ENCODE measurements at regions of chr7 and their contacts with region 1.

Region 1: GRCh38 chr7:66681491-66682349 is 53.0 kb downstream of the KCTD7 start:
- DNase-seq: peak; percentile 87 to 98 (median 95)
- ATAC-seq: peak; percentile 95
- H3K4me3 ChIP-seq: peak overlapping the region; percentile 95
- H3K4me3 Mint-ChIP-seq: peak overlapping the region; percentile 99
- H3K27ac ChIP-seq: peak overlapping the region; percentile 96 to 99
- H3K27ac Mint-ChIP-seq: peak overlapping the region; percentile 98
- H3K4me1 ChIP-seq: peaks cover 29% of the 10 kb centered on the region
- H3K4me1 Mint-ChIP-seq: peaks cover 40% of the 10 kb centered on the region
- H3K27me3 ChIP-seq: no peaks in the 10 kb centered on the region
- H3K27me3 Mint-ChIP-seq: no peaks in the 10 kb centered on the region
- CTCF ChIP-seq: no peak

Region 2: GRCh38 chr7:66591799-66592596 is 89.7 kb before region 1 on chr7:
- CTCF ChIA-PET with region 1: no interaction called
- POLR2A ChIA-PET with region 1: no interaction called
- intact Hi-C with region 1: loop called in 1 of 2 experiments (anchors 1 kb)
- DNase-seq: peak; percentile 76 to 96 (median 88)
- ATAC-seq: peak; percentile 98
- H3K4me3 ChIP-seq: peak overlapping the region; percentile 97
- H3K4me3 Mint-ChIP-seq: peak overlapping the region; percentile 99
- H3K27ac ChIP-seq: peak overlapping the region; percentile 60 to 80
- H3K27ac Mint-ChIP-seq: peak overlapping the region; percentile 99
- H3K4me1 ChIP-seq: peaks cover 43% of the 10 kb centered on the region
- H3K4me1 Mint-ChIP-seq: peaks cover 47% of the 10 kb centered on the region
- H3K27me3 ChIP-seq: no peaks in the 10 kb centered on the region
- H3K27me3 Mint-ChIP-seq: no peaks in the 10 kb centered on the region
- CTCF ChIP-seq: no peak

Region 3: DNA sequence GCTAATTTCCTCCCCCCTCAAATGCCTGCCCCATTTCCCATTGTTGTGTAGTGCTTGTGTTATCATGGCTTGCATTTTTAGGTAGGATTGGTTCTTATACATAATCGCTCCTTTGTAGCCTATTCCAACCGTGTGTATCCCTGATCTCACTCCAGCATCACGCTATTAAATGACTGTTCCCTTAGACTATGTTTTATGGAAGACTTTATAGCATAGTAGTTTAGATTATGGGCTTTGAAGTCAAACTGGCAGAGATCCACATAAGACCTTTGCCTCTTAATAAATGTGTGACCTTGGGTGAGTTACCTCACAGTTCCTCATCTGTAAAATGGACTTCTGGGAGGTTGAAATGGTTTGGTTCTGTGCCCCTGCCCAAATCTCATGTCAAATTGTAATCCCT is 53.4 kb after region 1 on chr7:
- CTCF ChIA-PET with region 1: no interaction called
- POLR2A ChIA-PET with region 1: interaction called, 8 read pairs
- intact Hi-C with region 1: loop called (anchors 1 kb)
- DNase-seq: no peak
- ATAC-seq: no peak
- H3K4me3 ChIP-seq: no peak overlapping the region
- H3K4me3 Mint-ChIP-seq: no peak overlapping the region
- H3K27ac ChIP-seq: no peak overlapping the region
- H3K27ac Mint-ChIP-seq: peak overlapping the region; percentile 66
- H3K4me1 ChIP-seq: peaks cover 19% of the 10 kb centered on the region
- H3K4me1 Mint-ChIP-seq: peaks cover 34% of the 10 kb centered on the region
- H3K27me3 ChIP-seq: no peaks in the 10 kb centered on the region
- H3K27me3 Mint-ChIP-seq: no peaks in the 10 kb centered on the region
- CTCF ChIP-seq: no peak

Region 4: DNA sequence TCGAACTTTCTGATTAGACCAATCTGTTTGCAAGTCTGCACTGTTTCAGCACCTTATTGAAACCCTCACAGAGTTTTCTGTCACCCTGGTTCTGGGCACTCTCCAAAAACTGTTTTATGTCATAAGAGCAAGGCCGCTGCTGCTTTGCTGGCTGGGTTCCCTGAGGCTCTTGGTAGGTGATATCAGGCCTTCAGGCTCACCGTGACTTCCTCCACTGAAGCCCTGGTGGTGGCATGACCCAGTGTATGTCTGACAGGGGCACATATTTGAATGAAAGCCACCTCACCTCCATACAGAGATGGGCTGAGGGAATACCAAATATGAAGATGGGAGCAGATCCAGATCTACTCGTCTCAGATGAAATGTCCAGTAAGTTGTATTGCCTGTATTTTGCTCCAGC is 67.1 kb after region 1 on chr7:
- CTCF ChIA-PET with region 1: no interaction called
- POLR2A ChIA-PET with region 1: no interaction called
- intact Hi-C with region 1: no loop called
- DNase-seq: no peak
- ATAC-seq: no peak
- H3K4me3 ChIP-seq: no peak overlapping the region
- H3K4me3 Mint-ChIP-seq: no peak overlapping the region
- H3K27ac ChIP-seq: no peak overlapping the region
- H3K27ac Mint-ChIP-seq: no peak overlapping the region
- H3K4me1 ChIP-seq: peaks cover 3% of the 10 kb centered on the region
- H3K4me1 Mint-ChIP-seq: peaks cover 44% of the 10 kb centered on the region
- H3K27me3 ChIP-seq: no peaks in the 10 kb centered on the region
- H3K27me3 Mint-ChIP-seq: no peaks in the 10 kb centered on the region
- CTCF ChIP-seq: no peak

Measured in CD4-positive, alpha-beta T cell (primary cell).